ENCODE measurements at regions of chr7 and their contacts with region 1.

Region 1: DNA sequence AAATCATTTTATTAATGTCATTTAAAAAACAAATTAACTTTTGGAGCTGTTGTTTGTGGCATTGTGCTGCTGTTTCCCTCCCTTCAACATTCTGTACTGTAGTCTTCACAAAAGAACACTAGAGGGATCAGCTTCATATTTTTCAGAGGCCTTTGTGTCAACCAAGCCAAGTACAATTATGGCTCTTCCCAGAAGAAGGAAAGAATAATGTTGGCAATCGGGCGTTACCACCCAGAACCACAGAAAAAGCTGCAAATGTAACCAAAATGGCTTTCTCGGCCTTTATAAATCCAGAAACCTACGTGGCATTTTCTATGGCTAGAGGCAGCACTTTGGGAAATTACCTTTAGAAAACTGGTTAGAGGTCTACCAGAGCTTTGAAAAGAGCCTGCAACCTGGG is 98.8 kb upstream of the COL1A2 start:
- DNase-seq: no peak
- ATAC-seq: peak; percentile 42
- H3K4me3 ChIP-seq: no peak overlapping the region
- H3K4me1 ChIP-seq: no peaks in the 10 kb centered on the region
- CTCF ChIP-seq: no peak

Region 2: DNA sequence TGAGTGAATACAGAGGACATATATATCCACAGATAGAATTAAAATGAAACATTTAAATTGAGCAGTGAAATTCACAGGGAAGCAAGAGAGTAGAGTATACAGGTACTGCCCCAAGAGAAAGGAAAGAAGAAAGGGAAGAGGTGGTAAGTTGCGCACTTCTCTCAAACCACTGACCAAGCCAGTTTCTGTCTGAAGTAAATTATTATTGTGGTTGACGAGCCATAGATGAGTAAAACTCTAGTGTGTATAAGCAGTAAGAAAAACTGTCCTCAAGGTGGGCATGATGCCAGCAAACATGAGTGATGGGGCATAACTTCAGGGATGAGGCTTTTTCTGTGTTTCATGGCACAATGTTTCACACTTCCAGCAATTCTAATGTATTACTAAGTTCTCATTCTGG is 287.3 kb before region 1 on chr7:
- intact Hi-C with region 1: no loop called
- DNase-seq: no peak
- ATAC-seq: no peak
- H3K4me3 ChIP-seq: no peak overlapping the region
- H3K4me1 ChIP-seq: peaks cover under 1% of the 10 kb centered on the region
- CTCF ChIP-seq: no peak

Region 3: DNA sequence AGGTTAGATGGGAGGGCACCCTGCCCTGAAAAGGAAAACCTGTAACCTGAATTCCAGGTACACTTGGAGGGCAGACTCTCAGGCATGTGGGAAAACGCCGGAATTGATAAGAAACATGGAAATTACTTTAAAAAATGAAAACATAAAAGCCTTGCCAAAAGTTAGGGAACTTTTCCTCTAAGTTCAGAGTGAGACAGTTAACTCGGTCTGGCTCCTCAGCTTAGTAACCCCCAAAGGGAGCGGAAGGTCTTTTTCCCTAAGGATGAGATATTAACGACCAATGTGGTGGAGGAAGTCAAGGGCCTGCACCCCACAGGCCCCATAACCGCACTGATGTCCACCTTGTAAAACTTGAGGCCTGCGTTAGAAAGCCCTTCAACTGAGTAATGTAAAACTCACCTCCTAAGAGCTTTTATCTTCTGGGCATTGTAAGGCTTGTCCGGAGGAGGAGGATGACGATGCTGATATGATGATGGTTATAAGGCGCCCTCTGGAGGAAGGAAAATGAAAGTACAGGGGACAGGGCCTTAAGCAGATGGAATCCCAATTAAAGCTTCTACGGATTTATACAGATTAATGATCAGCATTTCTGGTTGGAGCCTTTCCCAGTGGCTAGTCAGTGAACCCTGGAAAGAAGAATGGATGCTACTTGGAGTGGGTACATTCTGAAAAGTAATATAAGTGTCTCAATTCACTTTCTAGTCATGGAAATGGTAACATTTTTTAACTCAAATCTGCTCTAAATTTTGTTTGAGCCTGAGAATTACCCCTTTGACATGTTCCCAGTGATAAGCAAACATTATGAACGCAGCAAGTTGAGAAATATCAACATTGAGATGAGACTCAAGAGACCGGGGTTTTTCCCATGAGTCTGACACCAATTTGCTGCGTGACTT is 99.5 kb after region 1 on chr7:
- intact Hi-C with region 1: loop called (anchors 2 to 10 kb)
- DNase-seq: peak in 1 of 3 donors; percentile 54
- ATAC-seq: peak; percentile 72
- H3K4me3 ChIP-seq: peak overlapping the region; percentile 9
- H3K4me1 ChIP-seq: no peaks in the 10 kb centered on the region
- CTCF ChIP-seq: no peak